H1 (cell line): ENCODE measurements at regions of chr5 and their contacts with region 1.

Region 1: DNA sequence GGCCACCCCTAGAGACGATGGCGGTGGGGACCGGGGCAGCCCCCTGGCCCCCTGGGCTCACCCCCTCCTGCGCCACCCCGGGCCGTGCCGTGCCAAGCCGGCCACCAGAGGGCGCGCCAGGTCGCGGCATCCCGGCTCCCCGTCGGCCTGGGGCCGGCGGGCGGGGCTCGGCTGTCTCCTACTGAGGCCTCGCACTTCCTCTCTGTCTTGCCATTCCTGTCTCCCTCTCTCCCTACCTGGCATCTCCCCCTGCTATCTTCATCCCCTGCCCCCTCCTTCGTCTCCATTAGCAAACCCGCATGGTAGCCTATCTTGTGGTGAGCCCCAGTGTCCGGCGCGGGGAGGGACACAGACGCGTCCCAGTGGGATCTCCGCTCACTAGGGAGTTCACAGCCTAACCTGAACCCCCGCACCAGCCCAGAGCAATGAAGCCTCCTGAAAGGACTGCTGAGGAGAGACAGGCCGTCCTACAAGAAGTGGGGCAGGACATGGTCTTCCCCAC is 29.8 kb upstream of the FABP6 start:
- DNase-seq: peak in 1 of 2 experiments; percentile 93
- H3K4me3 ChIP-seq: peak overlapping the region in 3 of 4 experiments; percentile 5 to 51 (median 22); a peak in 5 of 8 replicates
- H3K27ac ChIP-seq: no peak overlapping the region
- H3K4me1 ChIP-seq: peaks cover 7 to 29% (median 17%) of the 10 kb centered on the region in 4 experiments
- H3K27me3 ChIP-seq: no peaks in the 10 kb centered on the region
- CTCF ChIP-seq: peak; percentile 77 to 90 (median 87)
- EP300 ChIP-seq: peak in 1 of 2 experiments; percentile 81; a peak in 1 of 3 replicates
- POLR2A ChIP-seq: no peak
- RAD21 ChIP-seq: peak; percentile 82 to 90

Region 2: DNA sequence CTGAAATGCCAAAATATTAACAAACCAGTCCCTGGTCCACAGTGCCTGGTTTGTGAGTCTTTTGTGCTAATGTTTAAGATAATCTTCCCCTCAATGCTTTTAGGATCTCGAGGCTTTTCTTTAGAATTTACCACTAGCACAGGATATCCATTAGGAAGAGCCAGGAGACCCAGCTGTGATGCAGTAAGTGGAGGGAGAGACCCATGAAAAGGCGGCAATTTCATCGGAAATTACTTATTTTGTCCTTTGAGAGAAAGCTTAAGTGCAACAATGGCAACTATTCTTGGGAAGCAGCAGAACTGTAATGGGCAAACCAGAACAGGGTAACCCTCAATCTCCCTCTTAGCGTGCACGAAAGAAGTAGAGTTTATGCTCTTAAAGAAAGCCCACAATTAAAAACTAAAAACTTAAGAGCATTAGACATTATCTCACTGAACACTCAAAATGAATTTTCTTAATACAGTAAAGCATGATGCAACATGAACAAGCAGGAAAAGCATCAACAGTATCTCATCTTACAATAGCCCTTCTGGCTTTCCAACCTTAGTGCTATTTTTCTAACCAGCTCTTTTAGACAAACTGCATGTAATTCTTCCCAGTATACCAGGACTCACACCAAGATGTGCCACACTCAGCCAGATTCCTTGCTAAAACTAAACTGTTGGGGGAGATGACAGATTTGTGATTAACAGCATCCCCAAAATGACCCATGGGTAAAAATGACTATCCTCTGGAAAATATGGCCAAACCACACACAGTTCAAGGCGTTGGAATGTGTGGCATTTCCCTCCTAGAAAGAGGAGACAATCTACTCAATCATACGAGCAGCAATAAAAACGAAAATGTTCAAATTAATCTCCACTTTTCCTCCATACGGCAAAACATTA is 116.6 kb before region 1 on chr5:
- CTCF ChIA-PET with region 1: interaction called, 27 read pairs
- POLR2A ChIA-PET with region 1: interaction called, 8 read pairs
- DNase-seq: no peak
- H3K4me3 ChIP-seq: no peak overlapping the region
- H3K27ac ChIP-seq: 0 out of 2 replicates have a peak overlapping the region, but pooled peaks have one; percentile 11
- H3K4me1 ChIP-seq: peaks cover 0 to 10% (median 0%) of the 10 kb centered on the region in 4 experiments; a peak in 2 of 7 replicates
- H3K27me3 ChIP-seq: no peaks in the 10 kb centered on the region
- CTCF ChIP-seq: no peak
- EP300 ChIP-seq: no peak
- POLR2A ChIP-seq: no peak
- RAD21 ChIP-seq: no peak

Region 3: DNA sequence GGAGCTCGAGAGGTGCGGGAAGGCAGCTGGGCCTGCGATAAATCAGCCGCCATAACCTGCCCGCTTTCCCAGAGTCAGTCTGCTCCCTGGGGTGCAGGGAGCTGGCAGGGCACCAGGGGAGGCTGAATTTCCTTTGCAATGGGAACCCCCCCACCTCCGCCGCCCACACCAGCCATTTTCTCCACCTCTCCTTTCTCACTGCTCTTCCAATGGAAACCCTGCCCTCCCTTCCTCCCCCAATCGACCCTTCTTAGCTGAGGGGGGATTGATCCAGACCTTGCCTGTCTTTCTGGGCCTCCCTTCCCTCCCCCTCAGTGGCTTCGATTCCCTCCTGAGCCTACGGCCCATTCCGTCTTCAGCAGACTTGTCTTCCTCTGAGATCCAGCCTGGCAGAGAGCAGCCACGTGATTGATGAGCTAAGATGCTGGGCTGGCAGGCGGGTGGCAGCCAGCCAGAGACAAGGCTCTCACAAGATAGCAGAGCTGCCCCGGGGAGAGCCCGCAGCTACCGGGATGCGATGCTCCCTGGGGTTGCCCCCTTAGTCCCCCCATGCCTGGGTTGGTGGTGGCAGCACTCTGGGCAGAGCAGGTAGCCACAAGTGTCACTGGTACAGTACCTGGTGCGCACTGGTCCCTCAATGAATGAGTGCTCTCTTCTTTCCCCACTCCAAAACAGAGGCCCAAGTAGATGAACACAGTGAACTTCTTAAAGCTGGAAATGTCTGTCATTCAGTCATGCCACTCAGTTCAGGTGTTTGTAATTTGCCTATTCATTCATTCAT is 23.8 kb before region 1 on chr5:
- CTCF ChIA-PET with region 1: interaction called, 20 read pairs
- POLR2A ChIA-PET with region 1: interaction called, 4 read pairs
- DNase-seq: no peak
- H3K4me3 ChIP-seq: no peak overlapping the region
- H3K27ac ChIP-seq: no peak overlapping the region
- H3K4me1 ChIP-seq: peaks cover 6 to 15% (median 7%) of the 10 kb centered on the region in 4 experiments; a peak in 6 of 7 replicates
- H3K27me3 ChIP-seq: no peaks in the 10 kb centered on the region
- CTCF ChIP-seq: no peak
- EP300 ChIP-seq: no peak
- POLR2A ChIP-seq: no peak
- RAD21 ChIP-seq: no peak

Region 4: DNA sequence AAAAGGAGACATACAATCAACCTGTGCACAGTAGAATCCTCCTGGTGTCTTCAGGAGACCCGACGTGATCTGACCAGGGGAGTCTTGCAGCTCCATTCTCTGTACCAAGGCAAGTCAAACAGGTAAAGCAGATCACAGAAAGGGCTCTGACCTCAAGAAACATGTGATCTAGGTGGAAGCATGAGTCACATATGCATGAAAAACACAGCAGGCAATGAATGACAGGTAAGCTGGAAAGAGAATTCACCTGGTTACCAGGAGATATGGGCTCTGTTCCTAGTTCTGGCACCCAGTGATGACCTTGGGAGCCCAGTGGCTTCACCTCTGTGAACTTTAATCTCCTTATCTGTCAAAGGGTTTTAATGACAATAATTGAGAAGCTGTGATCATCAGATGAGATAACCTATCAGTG is 10.5 kb after region 1 on chr5:
- CTCF ChIA-PET with region 1: interaction called, 16 read pairs
- POLR2A ChIA-PET with region 1: no interaction called
- DNase-seq: no peak
- H3K4me3 ChIP-seq: no peak overlapping the region
- H3K27ac ChIP-seq: no peak overlapping the region
- H3K4me1 ChIP-seq: no peaks in the 10 kb centered on the region
- H3K27me3 ChIP-seq: no peaks in the 10 kb centered on the region
- CTCF ChIP-seq: no peak
- EP300 ChIP-seq: no peak
- POLR2A ChIP-seq: no peak
- RAD21 ChIP-seq: no peak

Region 5: DNA sequence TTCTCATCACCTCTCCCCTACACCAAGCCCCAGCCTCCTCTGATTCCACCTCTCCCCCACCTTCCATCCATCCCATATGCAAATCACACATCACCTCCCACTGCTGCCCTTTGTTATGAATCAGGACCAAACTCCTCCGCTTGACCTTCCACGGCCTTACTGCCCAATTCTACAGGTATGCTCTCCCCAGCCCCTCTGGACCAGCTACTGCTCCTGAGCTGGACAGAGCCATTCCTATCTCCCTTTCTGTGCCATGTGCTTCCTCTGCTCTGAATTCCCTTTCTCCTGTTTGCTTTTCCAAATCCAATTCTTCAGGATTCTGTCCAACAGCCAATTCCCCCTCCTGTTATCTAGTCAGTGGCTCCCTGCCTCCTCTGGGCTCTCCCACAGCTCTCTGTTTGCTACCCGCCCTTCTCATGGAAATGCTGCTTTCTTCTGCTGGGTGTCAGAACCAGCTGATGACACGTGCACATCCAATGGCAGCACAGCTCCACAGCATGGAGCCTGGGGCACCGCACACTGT is 38.2 kb after region 1 on chr5:
- CTCF ChIA-PET with region 1: interaction called, 51 read pairs
- POLR2A ChIA-PET with region 1: interaction called, 3 read pairs
- DNase-seq: peak in 1 of 2 experiments; percentile 63
- H3K4me3 ChIP-seq: peak overlapping the region in 1 of 4 experiments; percentile 8; a peak in 2 of 8 replicates
- H3K27ac ChIP-seq: no peak overlapping the region
- H3K4me1 ChIP-seq: peaks cover 9 to 21% (median 13%) of the 10 kb centered on the region in 4 experiments
- H3K27me3 ChIP-seq: no peaks in the 10 kb centered on the region
- CTCF ChIP-seq: no peak
- EP300 ChIP-seq: no peak
- POLR2A ChIP-seq: no peak
- RAD21 ChIP-seq: no peak

Region 6: DNA sequence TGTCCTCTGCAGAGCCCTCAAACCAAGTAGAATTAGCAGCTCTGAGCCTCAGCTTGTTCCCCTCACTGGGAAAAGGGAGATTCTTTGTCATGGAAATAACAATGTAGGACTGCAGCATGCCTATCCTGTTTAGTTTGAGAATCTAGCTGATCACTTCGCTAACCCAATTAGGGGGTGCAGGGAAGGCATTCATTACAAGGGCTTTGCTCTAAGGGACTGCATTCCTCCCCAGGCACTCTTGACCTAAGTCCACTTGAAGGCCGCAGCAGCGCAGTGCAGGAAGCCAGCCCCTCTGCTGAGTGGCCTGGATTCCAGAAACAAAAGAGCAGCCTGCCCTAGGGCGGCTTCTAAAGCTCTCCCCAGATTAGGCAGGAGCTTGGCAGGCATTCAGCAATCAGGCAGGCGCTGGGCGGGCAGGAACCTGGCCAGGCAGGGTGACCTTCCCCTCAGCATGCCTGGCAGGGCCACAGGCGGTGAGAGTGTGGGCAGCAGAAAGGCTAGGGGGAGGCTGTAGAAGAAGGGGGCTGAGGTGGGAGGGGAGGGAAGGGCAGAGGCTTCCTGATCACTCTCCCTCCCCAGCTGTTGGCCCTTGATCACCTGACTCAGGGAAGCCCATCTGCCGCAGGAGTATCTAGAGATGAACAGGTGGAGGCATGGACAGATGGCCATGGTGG is 88.1 kb after region 1 on chr5:
- CTCF ChIA-PET with region 1: interaction called, 11 read pairs
- POLR2A ChIA-PET with region 1: interaction called, 3 read pairs
- DNase-seq: peak; percentile 81 to 91
- H3K4me3 ChIP-seq: peak overlapping the region in 1 of 4 experiments; percentile 36; a peak in 2 of 8 replicates
- H3K27ac ChIP-seq: peak overlapping the region; percentile 86
- H3K4me1 ChIP-seq: peaks cover 11 to 37% (median 22%) of the 10 kb centered on the region in 4 experiments
- H3K27me3 ChIP-seq: no peaks in the 10 kb centered on the region
- CTCF ChIP-seq: no peak
- EP300 ChIP-seq: peak in 1 of 2 experiments; percentile 85; a peak in 1 of 3 replicates
- POLR2A ChIP-seq: peak; percentile 54 to 64; a peak in 1 of 3 replicates
- RAD21 ChIP-seq: peak in 1 of 2 experiments; percentile 22; a peak in 1 of 4 replicates

Region 7: DNA sequence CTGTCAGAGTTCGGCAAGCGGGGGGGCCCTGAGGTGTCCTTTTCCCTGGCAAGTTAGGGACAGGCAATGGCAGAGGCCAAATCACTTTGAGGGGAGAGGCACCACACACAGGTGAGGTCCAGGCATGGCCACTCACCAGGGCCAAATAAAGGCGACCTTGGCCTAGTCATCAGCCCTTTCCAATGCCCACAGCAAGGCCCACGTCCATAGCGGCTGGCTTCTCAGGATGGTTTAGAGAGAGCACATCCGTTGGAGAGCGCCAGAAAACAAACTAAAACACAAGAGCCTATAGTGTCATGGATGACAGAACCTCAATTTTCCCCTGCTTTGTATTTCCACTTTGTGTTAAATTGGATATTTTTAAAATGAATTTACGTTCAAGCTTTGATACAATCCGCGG is 105.9 kb after region 1 on chr5:
- CTCF ChIA-PET with region 1: no interaction called
- POLR2A ChIA-PET with region 1: no interaction called
- DNase-seq: no peak
- H3K4me3 ChIP-seq: no peak overlapping the region
- H3K27ac ChIP-seq: no peak overlapping the region
- H3K4me1 ChIP-seq: no peaks in the 10 kb centered on the region; a peak in 1 of 7 replicates
- H3K27me3 ChIP-seq: no peaks in the 10 kb centered on the region
- CTCF ChIP-seq: no peak
- EP300 ChIP-seq: no peak
- POLR2A ChIP-seq: no peak
- RAD21 ChIP-seq: no peak